B cell (primary cell): ENCODE measurements at regions of chr4 and their contacts with region 1.

Region 1: GRCh38 chr4:123102897-123103471 is 180.6 kb upstream of the NUDT6 start:
- DNase-seq: peak; percentile 45
- ATAC-seq: no peak
- H3K4me3 ChIP-seq: no peak overlapping the region
- H3K4me3 Mint-ChIP-seq: no peak overlapping the region
- H3K27ac ChIP-seq: no peak overlapping the region
- H3K27ac Mint-ChIP-seq: no peak overlapping the region
- H3K4me1 ChIP-seq: no peaks in the 10 kb centered on the region
- H3K4me1 Mint-ChIP-seq: peaks cover 1% of the 10 kb centered on the region
- H3K27me3 ChIP-seq: no peaks in the 10 kb centered on the region
- H3K27me3 Mint-ChIP-seq: no peaks in the 10 kb centered on the region
- CTCF ChIP-seq: peak; percentile 80

Region 2: GRCh38 chr4:122827879-122828601 is 274.9 kb before region 1 on chr4:
- CTCF ChIA-PET with region 1: no interaction called
- POLR2A ChIA-PET with region 1: no interaction called
- intact Hi-C with region 1: no loop called
- DNase-seq: peak; percentile 67
- ATAC-seq: peak; percentile 59
- H3K4me3 ChIP-seq: peak overlapping the region; percentile 47 to 73 (median 58)
- H3K4me3 Mint-ChIP-seq: peak overlapping the region; percentile 87
- H3K27ac ChIP-seq: no peak overlapping the region
- H3K27ac Mint-ChIP-seq: peak overlapping the region; percentile 47
- H3K4me1 ChIP-seq: peaks cover 17 to 18% of the 10 kb centered on the region in 2 donors
- H3K4me1 Mint-ChIP-seq: peaks cover 19% of the 10 kb centered on the region
- H3K27me3 ChIP-seq: peaks cover 3 to 55% (median 43%) of the 10 kb centered on the region in 4 experiments
- H3K27me3 Mint-ChIP-seq: peaks cover 80% of the 10 kb centered on the region
- CTCF ChIP-seq: peak; percentile 17

Region 3: GRCh38 chr4:124322234-124323065 is 1219.5 kb after region 1 on chr4:
- CTCF ChIA-PET with region 1: interaction called, 10 read pairs
- POLR2A ChIA-PET with region 1: no interaction called
- intact Hi-C with region 1: no loop called
- DNase-seq: peak; percentile 30
- ATAC-seq: no peak
- H3K4me3 ChIP-seq: no peak overlapping the region
- H3K4me3 Mint-ChIP-seq: no peak overlapping the region
- H3K27ac ChIP-seq: no peak overlapping the region
- H3K27ac Mint-ChIP-seq: no peak overlapping the region
- H3K4me1 ChIP-seq: no peaks in the 10 kb centered on the region
- H3K4me1 Mint-ChIP-seq: no peaks in the 10 kb centered on the region
- H3K27me3 ChIP-seq: no peaks in the 10 kb centered on the region
- H3K27me3 Mint-ChIP-seq: no peaks in the 10 kb centered on the region
- CTCF ChIP-seq: peak; percentile 84